Posterior cingulate gyrus (tissue), 11 donors: ENCODE measurements at regions of chr9 and their contacts with region 1.

Region 1: GRCh38 chr9:125558453-125559092 is 148.4 kb downstream of the MAPKAP1 start:
- DNase-seq: peak in 5 of 10 donors; percentile 56 to 92 (median 61)

Region 2: GRCh38 chr9:125620216-125620615 is 61.6 kb after region 1 on chr9:
- intact Hi-C with region 1: no loop called
- DNase-seq: no peak

Region 3: DNA sequence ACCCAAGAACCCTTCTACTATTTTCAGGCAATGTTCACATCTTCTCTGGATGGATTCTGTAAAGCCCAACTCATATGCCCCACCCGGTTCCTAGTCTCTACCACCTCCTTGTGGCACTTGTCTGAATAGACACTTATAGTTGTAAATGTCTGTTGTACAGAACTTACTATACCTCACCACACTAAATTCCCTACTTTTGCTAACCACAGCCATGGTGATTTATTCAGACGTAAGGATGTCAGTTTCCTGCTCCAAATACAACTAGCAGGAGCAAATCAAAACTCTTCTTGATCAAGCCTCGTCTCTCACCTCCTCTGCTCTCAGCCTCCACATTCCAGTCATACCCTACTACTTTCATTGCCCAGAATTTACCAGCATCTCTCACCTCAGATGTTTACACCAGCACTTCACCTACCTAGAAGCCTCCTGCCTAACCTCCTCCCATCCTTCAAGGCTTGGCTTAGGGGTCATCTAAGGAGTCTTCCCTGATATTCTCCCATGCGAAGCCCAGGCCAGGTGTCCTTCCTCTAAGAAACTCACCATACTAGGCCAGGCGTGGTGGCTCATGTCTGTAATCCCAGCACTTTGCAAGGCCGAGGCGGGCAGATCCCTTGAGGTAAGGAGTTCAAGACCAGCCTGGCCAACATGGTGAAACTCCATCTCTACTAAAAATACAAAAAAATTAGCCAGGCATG is 73.0 kb after region 1 on chr9:
- intact Hi-C with region 1: loop called (anchors 10 kb)
- DNase-seq: no peak

Region 4: DNA sequence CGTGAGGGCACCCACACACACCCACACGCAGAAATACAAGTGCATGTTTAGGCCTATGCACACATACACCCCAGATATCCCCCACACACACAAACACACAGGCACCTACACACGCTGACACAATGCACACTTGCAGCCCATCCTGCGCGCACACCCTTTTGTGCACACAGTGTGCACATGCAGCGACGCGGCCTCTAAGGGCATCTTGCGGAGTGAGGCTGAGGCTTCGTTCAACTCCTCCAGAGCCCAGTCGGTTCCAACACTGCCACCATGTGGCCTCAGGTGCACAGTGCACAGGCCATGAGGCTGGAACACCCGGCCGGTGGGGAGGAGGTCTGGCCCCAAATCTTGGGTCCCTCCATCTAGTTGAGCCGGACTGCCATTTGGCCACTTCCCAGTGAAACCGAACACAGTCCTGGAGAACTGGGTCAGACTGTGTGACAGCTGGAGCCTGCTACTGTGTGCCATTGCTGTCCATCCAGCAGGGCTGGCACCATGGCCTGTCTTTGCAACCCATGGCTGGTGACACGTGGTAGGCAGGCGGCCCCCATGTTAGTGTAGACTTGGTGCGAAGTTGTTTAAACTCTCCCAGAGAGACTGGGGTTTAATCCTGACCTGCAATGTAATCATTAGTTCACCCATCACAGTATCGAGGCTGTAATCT is 670.3 kb after region 1 on chr9:
- intact Hi-C with region 1: loop called (anchors 10 kb)
- DNase-seq: peak; percentile 65 to 97 (median 82)